CD8-positive, alpha-beta T cell (primary cell): ENCODE measurements at regions of chr3 and their contacts with region 1.

Region 1: DNA sequence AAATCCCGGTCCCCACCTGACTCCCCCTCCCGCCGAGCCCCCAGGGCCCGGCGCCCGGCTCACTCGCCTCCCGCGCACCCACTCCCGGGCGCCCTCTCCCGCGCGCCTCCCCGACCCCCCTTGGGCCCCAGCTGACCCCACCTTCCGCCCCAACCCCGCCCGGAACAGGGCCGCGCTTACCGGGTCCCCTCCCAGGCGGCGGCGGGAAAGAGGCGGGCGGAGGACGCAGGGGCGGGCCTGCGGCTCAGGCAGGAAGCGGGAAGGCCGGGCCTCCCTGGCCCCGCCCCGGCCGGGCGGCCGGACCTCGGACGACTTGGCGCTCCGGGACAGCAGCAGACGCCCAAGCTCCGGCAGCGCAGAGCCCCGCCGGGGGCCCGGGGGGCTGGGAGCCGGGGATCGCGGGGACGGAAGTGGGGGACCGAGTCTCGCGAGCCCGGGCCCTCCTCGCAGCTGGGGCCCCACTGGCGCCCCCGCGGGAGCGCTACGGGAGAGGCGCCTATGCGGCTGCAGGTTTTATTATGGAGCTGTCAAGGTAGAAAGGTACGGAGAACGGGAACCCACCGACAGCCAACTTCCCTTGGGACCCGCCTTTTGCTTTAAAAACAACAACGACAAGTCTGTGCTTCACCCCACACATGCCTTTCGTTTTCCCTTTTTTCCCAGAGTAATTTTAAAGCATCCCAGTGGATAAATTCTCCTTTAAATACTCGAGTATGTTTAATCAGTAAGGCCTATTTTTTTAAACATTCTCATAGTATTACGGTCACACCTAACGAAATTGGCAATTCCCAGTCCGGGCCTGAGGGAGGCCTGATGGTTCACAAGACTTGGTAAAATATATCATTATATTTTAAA is at the start of gene SLC41A3:
- DNase-seq: peak; percentile 51 to 91 (median 82)
- ATAC-seq: peak; percentile 86
- H3K4me3 ChIP-seq: peak within 1 kb of the TSS; percentile 58 to 71
- H3K4me3 Mint-ChIP-seq: peak within 1 kb of the TSS; percentile 84
- H3K27ac ChIP-seq: peak within 1 kb of the TSS; percentile 71 to 80
- H3K27ac Mint-ChIP-seq: peak within 1 kb of the TSS; percentile 81
- H3K4me1 ChIP-seq: peaks cover 11% of the 10 kb centered on the region
- H3K4me1 Mint-ChIP-seq: peaks cover 26% of the 10 kb centered on the region
- H3K27me3 ChIP-seq: no peaks in the 10 kb centered on the region
- H3K27me3 Mint-ChIP-seq: no peaks in the 10 kb centered on the region
- CTCF ChIP-seq: peak; percentile 54
- total RNA-seq, gene SLC41A3: 24.0 to 26.1 TPM

Region 2: DNA sequence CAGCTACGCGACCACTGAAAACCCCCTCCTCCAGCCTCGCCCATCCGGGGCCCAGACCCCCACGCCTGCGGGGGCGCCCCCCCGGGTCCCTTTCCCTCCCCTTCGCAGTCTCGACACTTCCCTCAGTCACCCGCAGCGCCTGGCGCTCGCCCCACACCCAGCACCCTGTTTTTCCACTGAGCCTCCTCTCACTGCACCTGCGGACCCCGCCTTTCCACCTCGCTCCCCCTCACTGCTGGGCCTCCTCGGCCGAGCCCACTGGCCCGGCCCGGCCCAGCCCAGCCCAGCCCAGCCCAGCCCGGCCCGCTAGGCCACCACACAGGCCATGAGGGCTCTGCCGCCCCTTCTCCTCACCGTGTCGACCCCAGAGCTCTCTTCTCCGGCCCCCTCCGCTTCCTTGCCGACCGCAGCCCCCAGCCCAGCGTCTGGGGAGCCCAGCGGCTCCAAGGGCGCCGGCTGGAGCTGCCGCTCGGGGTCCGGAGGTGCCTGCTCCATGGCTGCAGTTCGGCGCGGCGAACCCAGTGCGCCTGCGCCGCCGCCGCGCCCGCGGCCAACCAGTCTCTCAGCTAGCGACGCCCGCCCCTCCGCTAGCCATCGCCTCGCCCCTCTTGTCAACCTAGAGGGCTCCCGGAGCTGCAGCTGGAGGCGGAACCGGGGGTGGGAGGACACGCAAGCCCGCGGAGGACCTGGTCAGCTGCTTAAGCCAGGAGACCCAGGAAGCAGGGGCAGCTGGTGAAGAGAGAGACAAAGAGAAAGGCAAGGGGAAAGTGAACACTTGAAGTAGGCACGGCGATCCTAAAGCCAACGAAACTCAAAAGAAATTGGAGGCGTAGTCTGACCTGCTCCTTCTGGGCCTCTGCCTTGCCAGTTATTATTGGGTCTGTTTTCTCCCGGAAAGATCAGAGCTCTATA is 564.2 kb before region 1 on chr3 and contains the start of gene SNX4:
- CTCF ChIA-PET with region 1: no interaction called
- POLR2A ChIA-PET with region 1: no interaction called
- intact Hi-C with region 1: loop called in 1 of 2 experiments (anchors 10 kb)
- DNase-seq: peak; percentile 73 to 91 (median 86)
- ATAC-seq: peak; percentile 96
- H3K4me3 ChIP-seq: peak within 1 kb of the TSS; percentile 66 to 77
- H3K4me3 Mint-ChIP-seq: peak within 1 kb of the TSS; percentile 97
- H3K27ac ChIP-seq: peak within 1 kb of the TSS; percentile 60 to 61
- H3K27ac Mint-ChIP-seq: peak within 1 kb of the TSS; percentile 95
- H3K4me1 ChIP-seq: peaks cover 12% of the 10 kb centered on the region
- H3K4me1 Mint-ChIP-seq: peaks cover 46% of the 10 kb centered on the region
- H3K27me3 ChIP-seq: no peaks in the 10 kb centered on the region
- H3K27me3 Mint-ChIP-seq: no peaks in the 10 kb centered on the region
- CTCF ChIP-seq: no peak
- total RNA-seq, gene SNX4: 26.4 to 29.7 TPM

Region 3: DNA sequence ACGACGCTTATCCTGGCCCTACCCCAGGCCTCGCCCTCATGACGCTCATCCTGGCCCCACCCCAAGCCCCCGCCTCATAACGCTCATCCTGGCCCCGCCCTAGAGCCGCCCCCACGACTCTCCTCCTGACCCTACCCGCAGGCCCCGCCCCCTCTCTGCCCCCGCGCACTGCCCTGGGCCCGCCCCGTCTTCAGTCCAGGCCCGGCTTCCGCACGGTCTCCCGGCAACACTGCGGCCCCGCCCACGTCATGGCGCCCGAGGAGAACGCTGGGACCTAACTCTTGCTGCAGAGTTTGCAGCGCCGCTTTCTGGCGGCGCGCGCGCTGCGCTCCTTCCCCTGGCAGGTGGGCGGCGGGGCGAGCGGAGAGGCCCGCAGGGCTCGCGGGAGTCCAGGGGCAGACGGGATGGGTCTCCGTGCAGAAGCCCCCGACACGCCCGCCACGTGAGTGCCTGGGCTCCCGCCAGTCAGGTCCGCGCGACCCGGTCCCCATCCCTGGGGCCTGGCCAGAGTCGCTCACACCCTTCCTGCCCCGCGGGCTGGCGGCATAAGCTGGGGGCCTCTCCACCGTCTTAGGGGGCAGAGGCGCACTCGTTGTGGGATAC is 167.7 kb before region 1 on chr3:
- CTCF ChIA-PET with region 1: no interaction called
- POLR2A ChIA-PET with region 1: interaction called, 3 read pairs
- intact Hi-C with region 1: loop called (anchors 1 to 2 kb)
- DNase-seq: peak; percentile 89 to 98 (median 94)
- ATAC-seq: peak; percentile 94
- H3K4me3 ChIP-seq: peak overlapping the region; percentile 61 to 81
- H3K4me3 Mint-ChIP-seq: peak overlapping the region; percentile 90
- H3K27ac ChIP-seq: peak overlapping the region; percentile 74 to 84
- H3K27ac Mint-ChIP-seq: peak overlapping the region; percentile 96
- H3K4me1 ChIP-seq: peaks cover 6% of the 10 kb centered on the region
- H3K4me1 Mint-ChIP-seq: peaks cover 19% of the 10 kb centered on the region
- H3K27me3 ChIP-seq: no peaks in the 10 kb centered on the region
- H3K27me3 Mint-ChIP-seq: no peaks in the 10 kb centered on the region
- CTCF ChIP-seq: peak; percentile 18

Region 4: GRCh38 chr3:126134219-126134975 is 50.3 kb after region 1 on chr3:
- CTCF ChIA-PET with region 1: no interaction called
- POLR2A ChIA-PET with region 1: no interaction called
- intact Hi-C with region 1: loop called in 1 of 2 experiments (anchors 2 kb)
- DNase-seq: peak in 8 of 9 experiments; percentile 20 to 62 (median 46)
- ATAC-seq: peak; percentile 49
- H3K4me3 ChIP-seq: no peak overlapping the region
- H3K4me3 Mint-ChIP-seq: no peak overlapping the region
- H3K27ac ChIP-seq: no peak overlapping the region
- H3K27ac Mint-ChIP-seq: no peak overlapping the region
- H3K4me1 ChIP-seq: no peaks in the 10 kb centered on the region
- H3K4me1 Mint-ChIP-seq: peaks cover 2% of the 10 kb centered on the region
- H3K27me3 ChIP-seq: no peaks in the 10 kb centered on the region
- H3K27me3 Mint-ChIP-seq: peaks cover 23% of the 10 kb centered on the region
- CTCF ChIP-seq: peak; percentile 48

Region 5: GRCh38 chr3:126703512-126704462 is 619.6 kb after region 1 on chr3 and contains the start of gene CHCHD6:
- CTCF ChIA-PET with region 1: no interaction called
- POLR2A ChIA-PET with region 1: no interaction called
- intact Hi-C with region 1: loop called (anchors 5 kb)
- DNase-seq: peak; percentile 92 to 99 (median 96)
- ATAC-seq: peak; percentile 93
- H3K4me3 ChIP-seq: peak within 1 kb of the TSS; percentile 74 to 75
- H3K4me3 Mint-ChIP-seq: peak within 1 kb of the TSS; percentile 98
- H3K27ac ChIP-seq: peak within 1 kb of the TSS in 1 of 2 experiments; percentile 36
- H3K27ac Mint-ChIP-seq: peak within 1 kb of the TSS; percentile 88
- H3K4me1 ChIP-seq: peaks cover 17% of the 10 kb centered on the region
- H3K4me1 Mint-ChIP-seq: peaks cover 22% of the 10 kb centered on the region
- H3K27me3 ChIP-seq: no peaks in the 10 kb centered on the region
- H3K27me3 Mint-ChIP-seq: peaks cover 15% of the 10 kb centered on the region
- CTCF ChIP-seq: no peak
- total RNA-seq, gene CHCHD6: 6.2 to 6.4 TPM

Region 6: GRCh38 chr3:127672516-127673190 is 1588.5 kb after region 1 on chr3 and contains the start of gene ABTB1:
- CTCF ChIA-PET with region 1: no interaction called
- POLR2A ChIA-PET with region 1: no interaction called
- intact Hi-C with region 1: loop called in 1 of 2 experiments (anchors 2 kb)
- DNase-seq: peak; percentile 74 to 92 (median 87)
- ATAC-seq: peak; percentile 83
- H3K4me3 ChIP-seq: peak within 1 kb of the TSS; percentile 71 to 87
- H3K4me3 Mint-ChIP-seq: peak within 1 kb of the TSS; percentile 93
- H3K27ac ChIP-seq: peak within 1 kb of the TSS; percentile 80 to 92
- H3K27ac Mint-ChIP-seq: peak within 1 kb of the TSS; percentile 99
- H3K4me1 ChIP-seq: peaks cover 31% of the 10 kb centered on the region
- H3K4me1 Mint-ChIP-seq: peaks cover 31% of the 10 kb centered on the region
- H3K27me3 ChIP-seq: no peaks in the 10 kb centered on the region
- H3K27me3 Mint-ChIP-seq: no peaks in the 10 kb centered on the region
- CTCF ChIP-seq: no peak
- total RNA-seq, gene ABTB1: 86.0 to 88.1 TPM